WTC11 (cell line): ENCODE measurements at regions of chr3 and their contacts with region 1.

Region 1: GRCh38 chr3:152834776-152835600 is at the start of gene P2RY1:
- DNase-seq: peak; percentile 90
- ATAC-seq: peak; percentile 88
- H3K4me3 Mint-ChIP-seq: peak within 1 kb of the TSS; percentile 91
- H3K27ac Mint-ChIP-seq: peak within 1 kb of the TSS; percentile 99
- H3K4me1 Mint-ChIP-seq: peaks cover 50% of the 10 kb centered on the region
- H3K27me3 Mint-ChIP-seq: peaks cover 11% of the 10 kb centered on the region
- CTCF ChIP-seq: no peak
- total RNA-seq, gene P2RY1: 31.6 to 47.2 TPM (median 32.9 TPM) in 3 replicates

Region 2: DNA sequence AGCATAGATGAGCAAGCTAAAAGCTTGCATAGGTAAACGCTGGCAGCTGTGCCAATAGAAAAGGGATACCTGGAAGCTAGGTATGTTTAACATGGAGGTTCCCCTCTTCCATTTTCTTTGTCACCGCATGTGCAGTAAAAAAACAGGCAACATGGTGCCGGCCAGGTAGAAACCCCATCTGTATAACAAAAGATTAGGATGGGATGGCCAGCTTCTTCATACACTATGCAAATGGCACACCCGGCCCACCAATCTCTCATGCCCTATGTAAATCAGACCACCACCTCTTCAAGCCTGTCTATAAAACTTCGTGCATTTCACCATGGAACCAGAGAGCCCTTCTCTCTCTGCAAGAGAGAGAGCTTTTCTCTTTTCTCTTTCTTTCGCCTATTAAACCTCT is 224.4 kb before region 1 on chr3:
- CTCF ChIA-PET with region 1: interaction called, 4 read pairs
- POLR2A ChIA-PET with region 1: interaction called, 10 read pairs
- DNase-seq: peak; percentile 23
- ATAC-seq: peak; percentile 82
- H3K4me3 Mint-ChIP-seq: 0 out of 2 replicates have a peak overlapping the region, but pooled peaks have one; percentile 12
- H3K27ac Mint-ChIP-seq: peak overlapping the region; percentile 98
- H3K4me1 Mint-ChIP-seq: peaks cover 53% of the 10 kb centered on the region
- H3K27me3 Mint-ChIP-seq: no peaks in the 10 kb centered on the region
- CTCF ChIP-seq: no peak

Region 3: GRCh38 chr3:152780553-152780952 is 54.4 kb before region 1 on chr3:
- CTCF ChIA-PET with region 1: no interaction called
- POLR2A ChIA-PET with region 1: no interaction called
- DNase-seq: no peak
- ATAC-seq: no peak
- H3K4me3 Mint-ChIP-seq: no peak overlapping the region
- H3K27ac Mint-ChIP-seq: no peak overlapping the region
- H3K4me1 Mint-ChIP-seq: peaks cover 10% of the 10 kb centered on the region
- H3K27me3 Mint-ChIP-seq: no peaks in the 10 kb centered on the region
- CTCF ChIP-seq: no peak